ENCODE measurements at regions of chr17 and their contacts with region 1.

Region 1: DNA sequence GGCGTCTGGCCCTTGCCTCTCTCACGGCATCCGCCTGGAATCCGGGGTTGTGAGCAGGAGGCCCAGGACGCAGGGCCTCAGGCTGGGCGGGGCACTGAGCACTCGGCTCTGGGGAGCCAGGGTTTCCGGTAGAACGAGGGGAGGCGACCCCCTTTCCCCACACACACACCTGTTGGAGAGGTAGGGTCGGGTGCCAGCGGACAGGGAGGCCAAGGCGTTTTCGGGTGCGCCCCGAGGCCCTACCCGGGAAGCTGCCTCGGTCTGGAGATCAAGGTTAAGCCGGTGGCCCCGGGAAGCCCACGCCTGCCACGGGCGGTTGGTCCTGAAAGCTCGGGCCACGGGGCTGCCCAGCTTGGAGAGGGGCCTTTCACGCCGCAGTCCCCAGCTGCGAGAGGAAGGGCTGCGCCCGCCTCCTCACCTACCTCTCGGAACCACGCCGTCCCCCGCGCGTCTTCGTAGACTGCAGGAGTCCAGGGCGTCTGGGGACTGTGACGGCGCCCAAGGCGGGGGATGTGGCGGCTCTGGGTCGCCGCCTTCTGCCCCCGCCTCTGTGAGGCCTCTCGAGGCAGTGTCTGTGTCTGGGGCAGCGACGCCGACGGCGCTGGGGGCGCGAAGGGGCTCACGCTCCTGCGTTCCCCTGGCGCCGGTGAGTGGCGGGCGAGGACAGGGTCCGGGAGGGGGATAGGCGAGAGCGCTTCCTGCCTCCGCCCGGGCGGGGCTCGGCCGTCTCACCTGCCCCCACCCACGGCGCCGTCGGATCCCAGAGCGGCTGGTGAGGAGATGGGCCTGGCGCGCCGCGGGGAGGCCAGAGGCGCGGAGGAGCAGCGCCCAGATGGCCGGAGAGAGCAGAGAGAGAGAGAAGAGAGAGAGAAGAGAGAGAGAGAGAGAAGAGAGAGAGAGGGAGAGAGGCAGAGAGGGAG is 20.3 kb upstream of the HOXB9 start:
- DNase-seq: peak; percentile 27
- ATAC-seq: peak; percentile 56
- H3K4me3 Mint-ChIP-seq: peak overlapping the region; percentile 89
- H3K27ac Mint-ChIP-seq: no peak overlapping the region
- H3K4me1 Mint-ChIP-seq: peaks cover 27% of the 10 kb centered on the region
- H3K27me3 Mint-ChIP-seq: peaks cover 58% of the 10 kb centered on the region
- CTCF ChIP-seq: no peak

Region 2: DNA sequence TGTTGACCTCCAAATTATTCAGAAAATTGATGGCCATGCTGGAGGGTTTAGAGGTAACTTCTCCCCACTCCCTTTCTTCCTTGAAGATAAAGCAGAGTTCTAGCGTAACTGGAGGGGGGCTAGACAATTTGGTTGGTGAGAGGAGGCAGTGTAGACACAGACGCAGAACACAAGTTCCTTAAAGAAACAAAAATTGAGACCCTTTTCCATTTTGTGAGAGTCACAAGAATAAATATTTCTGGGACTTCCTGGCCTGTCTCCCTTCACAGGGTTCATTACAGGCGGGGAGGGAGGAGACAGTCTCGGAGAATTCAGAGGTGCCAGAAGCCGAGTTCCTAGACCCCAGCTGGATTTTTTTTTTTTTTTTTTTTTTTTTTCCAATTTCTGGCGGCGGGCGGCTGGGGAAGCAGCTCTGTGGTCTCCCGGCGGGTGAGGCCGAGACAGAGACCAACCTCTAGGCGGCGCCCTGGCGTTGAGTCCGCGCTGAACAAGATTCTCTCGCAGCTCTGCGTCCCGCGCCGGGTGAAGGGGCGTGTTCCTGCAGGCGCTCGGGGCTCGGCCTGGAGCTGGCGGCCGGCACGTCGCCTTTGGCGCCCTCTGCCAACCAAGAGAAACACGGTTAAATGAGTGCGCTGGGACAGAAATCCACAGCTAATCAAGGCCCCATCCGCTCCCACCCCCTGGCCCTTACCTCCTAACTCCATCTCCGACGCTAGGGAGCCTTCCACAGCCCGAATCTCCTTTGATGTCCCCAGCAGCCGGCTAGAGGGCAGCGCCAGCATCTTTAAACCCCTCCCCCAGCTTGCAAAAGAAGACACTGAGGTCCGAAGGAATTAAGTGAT is 10.0 kb before region 1 on chr17:
- CTCF ChIA-PET with region 1: interaction called, 11 read pairs
- POLR2A ChIA-PET with region 1: no interaction called
- intact Hi-C with region 1: no loop called
- DNase-seq: no peak
- ATAC-seq: peak; percentile 71
- H3K4me3 Mint-ChIP-seq: no peak overlapping the region
- H3K27ac Mint-ChIP-seq: no peak overlapping the region
- H3K4me1 Mint-ChIP-seq: peaks cover 6% of the 10 kb centered on the region
- H3K27me3 Mint-ChIP-seq: peaks cover 82% of the 10 kb centered on the region
- CTCF ChIP-seq: no peak